Activated CD4-positive, alpha-beta memory T cell treated with anti-CD3 and anti-CD28 coated beads for 36 hours (primary cell): ENCODE measurements at regions of chr3 and their contacts with region 1.

Region 1: DNA sequence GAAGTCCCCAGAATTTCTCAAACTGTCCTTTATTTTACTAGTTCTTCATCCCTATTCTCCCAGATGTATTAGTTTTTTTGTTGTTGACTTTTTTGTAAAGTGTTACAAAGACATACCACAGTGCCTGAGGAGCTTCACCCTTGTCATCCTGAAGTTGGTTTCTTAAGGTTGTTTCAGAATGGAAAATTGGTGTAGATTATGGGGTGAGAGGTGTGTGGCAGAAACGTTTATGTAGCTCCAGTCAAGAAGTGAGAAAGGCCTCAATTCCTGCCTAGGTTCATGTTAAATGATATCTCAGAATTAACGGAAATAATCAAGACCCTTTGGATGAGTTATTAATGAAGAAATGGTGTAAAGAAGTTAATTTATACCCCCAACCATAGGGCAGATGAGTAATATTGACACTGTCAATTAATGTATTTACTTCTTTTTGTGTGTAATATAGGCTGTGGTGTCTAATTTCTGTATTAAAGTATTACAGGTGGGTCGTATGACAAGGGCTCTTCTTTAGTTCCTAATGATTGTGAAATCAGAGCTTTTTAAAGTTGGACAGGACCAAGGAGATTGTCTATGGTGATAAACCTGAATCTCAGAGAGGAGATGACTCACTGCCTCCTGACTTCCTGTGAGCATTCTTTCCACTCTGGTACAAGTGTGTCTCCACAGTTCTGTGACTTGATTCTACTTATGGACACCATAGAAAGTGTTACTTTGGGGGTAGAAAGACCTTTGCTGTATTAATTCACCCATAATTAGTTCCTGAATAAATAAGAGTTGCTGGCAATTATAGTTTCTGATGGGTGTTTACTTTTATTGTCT is 7.0 kb downstream of the EDEM1 start:
- DNase-seq: peak; percentile 62
- H3K4me3 Mint-ChIP-seq: peak overlapping the region; percentile 66
- H3K27ac Mint-ChIP-seq: peak overlapping the region; percentile 98
- H3K4me1 Mint-ChIP-seq: peaks cover 85% of the 10 kb centered on the region
- H3K27me3 Mint-ChIP-seq: no peaks in the 10 kb centered on the region

Region 2: DNA sequence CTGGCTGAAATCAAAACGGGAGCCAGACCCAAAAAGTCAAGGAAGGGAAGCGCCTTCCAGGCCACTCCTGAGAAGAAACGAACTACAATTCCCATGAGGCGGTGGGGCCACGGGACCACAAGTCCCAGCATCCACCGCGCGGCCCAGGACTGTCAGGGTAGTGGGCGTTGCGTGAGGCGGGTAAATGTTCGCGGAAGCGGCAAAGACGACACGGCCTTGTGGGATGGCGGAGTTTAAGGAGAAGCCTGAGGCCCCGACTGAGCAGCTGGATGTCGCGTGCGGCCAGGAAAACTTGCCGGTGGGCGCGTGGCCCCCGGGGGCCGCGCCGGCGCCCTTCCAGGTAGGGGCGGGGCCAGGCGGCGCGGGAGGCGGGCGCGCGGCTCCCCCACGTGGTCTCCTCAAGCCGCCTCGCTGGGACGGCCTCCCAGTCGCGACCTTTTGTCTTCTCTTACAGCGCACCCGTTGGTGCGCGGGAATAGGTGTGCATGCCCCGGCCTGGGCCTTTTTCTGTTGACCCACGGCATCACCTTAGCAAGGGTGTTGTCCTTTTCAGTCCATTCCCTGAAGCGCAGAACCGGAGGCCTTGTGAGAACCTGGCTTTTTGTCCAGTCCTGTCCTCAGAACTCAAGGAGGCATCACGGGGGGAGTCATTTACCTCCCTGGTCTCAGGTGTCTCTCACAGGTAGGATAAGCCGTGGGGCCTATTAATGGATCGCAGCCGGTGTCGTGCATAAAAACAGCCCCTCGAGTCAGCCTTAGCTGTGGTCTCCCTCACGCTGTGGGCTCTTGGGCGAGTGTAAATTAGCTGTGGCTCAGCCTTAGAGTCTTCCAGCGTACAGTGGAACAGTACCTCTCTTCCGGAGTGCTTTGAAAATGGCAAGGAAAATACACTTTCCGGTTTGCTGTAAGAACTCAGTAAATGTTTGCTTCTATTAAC is 891.1 kb before region 1 on chr3 and contains the start of gene SETMAR:
- CTCF ChIA-PET with region 1: no interaction called
- POLR2A ChIA-PET with region 1: no interaction called
- intact Hi-C with region 1: loop called (anchors 5 kb)
- DNase-seq: peak; percentile 91
- H3K4me3 Mint-ChIP-seq: peak within 1 kb of the TSS; percentile 93
- H3K27ac Mint-ChIP-seq: peak within 1 kb of the TSS; percentile 96
- H3K4me1 Mint-ChIP-seq: peaks cover 23% of the 10 kb centered on the region
- H3K27me3 Mint-ChIP-seq: no peaks in the 10 kb centered on the region
- total RNA-seq, gene SETMAR: 11.7 to 13.8 TPM

Region 3: GRCh38 chr3:4850928-4851265 is 343.7 kb before region 1 on chr3:
- CTCF ChIA-PET with region 1: no interaction called
- POLR2A ChIA-PET with region 1: no interaction called
- intact Hi-C with region 1: loop called (anchors 2 kb)
- DNase-seq: peak; percentile 43
- H3K4me3 Mint-ChIP-seq: peak overlapping the region; percentile 53
- H3K27ac Mint-ChIP-seq: peak overlapping the region; percentile 88
- H3K4me1 Mint-ChIP-seq: peaks cover 88% of the 10 kb centered on the region
- H3K27me3 Mint-ChIP-seq: no peaks in the 10 kb centered on the region

Region 4: DNA sequence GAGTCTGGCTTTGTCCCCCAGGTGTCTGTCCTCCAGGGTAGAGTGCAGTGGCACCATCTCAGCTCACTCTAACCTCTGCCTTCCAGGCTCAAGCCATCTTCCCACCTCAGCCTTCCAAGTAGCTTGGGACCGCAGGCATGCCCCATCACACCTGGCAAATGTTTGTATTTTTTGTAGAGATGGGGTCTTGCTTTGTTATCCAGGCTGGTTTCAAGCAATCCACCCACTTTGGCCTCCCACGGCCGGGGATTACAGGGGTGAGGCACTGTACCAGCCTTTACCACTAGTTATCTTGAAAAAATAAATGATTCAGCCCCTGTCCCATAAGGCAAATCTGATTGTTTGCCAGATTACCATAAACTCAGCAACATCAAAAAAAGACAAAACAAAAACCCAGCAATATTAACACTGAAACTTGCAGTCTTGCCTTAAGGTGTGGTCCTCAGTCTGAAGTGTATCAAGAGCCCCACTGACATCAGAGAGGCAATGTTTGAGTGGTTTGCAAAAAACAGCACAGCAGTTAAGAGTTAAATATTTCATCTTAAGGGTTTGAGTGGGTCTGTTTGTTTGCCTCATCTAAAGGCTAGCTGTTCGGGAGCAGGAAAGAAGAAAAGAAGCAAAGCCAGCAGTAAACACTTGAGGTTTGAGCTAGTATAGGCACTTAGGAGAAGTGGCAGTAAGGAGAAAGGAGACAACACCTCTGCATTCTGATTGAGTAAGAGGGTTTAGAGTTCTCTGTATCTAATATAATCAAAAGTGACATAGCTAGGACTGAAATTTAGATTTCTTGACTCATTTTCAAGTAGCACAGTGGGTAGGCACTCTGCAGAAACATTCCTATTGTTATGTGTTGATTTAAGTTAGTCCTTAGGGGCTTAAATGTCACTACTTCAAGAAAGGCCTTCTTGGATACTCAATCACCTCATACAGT is 33.4 kb before region 1 on chr3:
- CTCF ChIA-PET with region 1: interaction called, 3 read pairs
- POLR2A ChIA-PET with region 1: no interaction called
- intact Hi-C with region 1: loop called (anchors 2 kb)
- DNase-seq: peak; percentile 61
- H3K4me3 Mint-ChIP-seq: no peak overlapping the region
- H3K27ac Mint-ChIP-seq: peak overlapping the region; percentile 78
- H3K4me1 Mint-ChIP-seq: peaks cover 71% of the 10 kb centered on the region
- H3K27me3 Mint-ChIP-seq: no peaks in the 10 kb centered on the region

Region 5: GRCh38 chr3:5239602-5240001 is 45.1 kb after region 1 on chr3:
- CTCF ChIA-PET with region 1: no interaction called
- POLR2A ChIA-PET with region 1: no interaction called
- intact Hi-C with region 1: no loop called
- DNase-seq: no peak
- H3K4me3 Mint-ChIP-seq: no peak overlapping the region
- H3K27ac Mint-ChIP-seq: no peak overlapping the region
- H3K4me1 Mint-ChIP-seq: peaks cover 5% of the 10 kb centered on the region
- H3K27me3 Mint-ChIP-seq: no peaks in the 10 kb centered on the region

Region 6: GRCh38 chr3:5330152-5330810 is 135.7 kb after region 1 on chr3:
- CTCF ChIA-PET with region 1: no interaction called
- POLR2A ChIA-PET with region 1: no interaction called
- intact Hi-C with region 1: loop called (anchors 2 kb)
- DNase-seq: peak; percentile 65
- H3K4me3 Mint-ChIP-seq: peak overlapping the region; percentile 36
- H3K27ac Mint-ChIP-seq: peak overlapping the region; percentile 59
- H3K4me1 Mint-ChIP-seq: peaks cover 32% of the 10 kb centered on the region
- H3K27me3 Mint-ChIP-seq: peaks cover 3% of the 10 kb centered on the region